ENCODE measurements at regions of chr1 and their contacts with region 1.

Region 1: GRCh38 chr1:221987860-221988520 is 246.1 kb upstream of the DUSP10 start:
- DNase-seq: peak; percentile 96
- ATAC-seq: peak; percentile 64
- H3K4me3 ChIP-seq: no peak overlapping the region
- H3K27ac ChIP-seq: peak overlapping the region; percentile 64
- H3K4me1 ChIP-seq: peaks cover 23% of the 10 kb centered on the region
- H3K27me3 ChIP-seq: no peaks in the 10 kb centered on the region
- CTCF ChIP-seq: no peak
- POLR2A ChIP-seq: no peak
- RAD21 ChIP-seq: no peak

Region 2: GRCh38 chr1:221699577-221699976 is 288.4 kb before region 1 on chr1:
- CTCF ChIA-PET with region 1: interaction called, 10 read pairs
- POLR2A ChIA-PET with region 1: no interaction called
- dilution Hi-C with region 1: no loop called
- in situ Hi-C with region 1: no loop called
- intact Hi-C with region 1: no loop called
- DNase-seq: peak; percentile 75
- ATAC-seq: peak; percentile 50
- H3K4me3 ChIP-seq: no peak overlapping the region
- H3K27ac ChIP-seq: peak overlapping the region; percentile 35; the same call in 1 of the 2 replicates
- H3K4me1 ChIP-seq: peaks cover 19% of the 10 kb centered on the region
- H3K27me3 ChIP-seq: no peaks in the 10 kb centered on the region
- CTCF ChIP-seq: no peak
- POLR2A ChIP-seq: no peak
- RAD21 ChIP-seq: no peak

Region 3: GRCh38 chr1:221858818-221859611 is 129.0 kb before region 1 on chr1:
- CTCF ChIA-PET with region 1: no interaction called
- POLR2A ChIA-PET with region 1: no interaction called
- dilution Hi-C with region 1: no loop called
- in situ Hi-C with region 1: no loop called
- intact Hi-C with region 1: no loop called
- DNase-seq: peak; percentile 93
- ATAC-seq: peak; percentile 89
- H3K4me3 ChIP-seq: no peak overlapping the region
- H3K27ac ChIP-seq: no peak overlapping the region
- H3K4me1 ChIP-seq: peaks cover 2% of the 10 kb centered on the region
- H3K27me3 ChIP-seq: no peaks in the 10 kb centered on the region
- CTCF ChIP-seq: no peak
- POLR2A ChIP-seq: no peak
- RAD21 ChIP-seq: peak; percentile 14; the same call in 1 of the 2 replicates

Region 4: DNA sequence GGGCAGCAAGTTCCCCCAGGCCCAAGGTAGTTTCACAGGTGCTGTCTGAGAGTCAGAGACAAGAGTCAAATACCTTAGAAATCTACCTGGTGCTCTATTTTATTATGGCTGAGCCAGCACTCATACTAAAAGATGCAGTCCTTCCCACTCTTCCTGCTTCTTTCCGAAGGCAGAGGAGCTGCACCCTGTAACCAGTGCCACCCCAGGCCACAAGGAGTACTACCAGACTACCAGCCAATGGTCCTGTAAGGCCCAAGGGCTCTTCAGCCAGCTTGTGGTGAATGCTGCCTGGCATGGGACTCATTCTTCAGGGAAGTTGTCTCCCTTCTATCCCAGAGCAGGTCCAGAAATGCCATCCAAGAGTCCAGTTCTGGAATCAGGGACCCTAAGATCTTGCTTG is 42.3 kb before region 1 on chr1:
- CTCF ChIA-PET with region 1: no interaction called
- POLR2A ChIA-PET with region 1: no interaction called
- dilution Hi-C with region 1: no loop called
- in situ Hi-C with region 1: no loop called
- intact Hi-C with region 1: loop called (anchors 2 kb)
- DNase-seq: no peak
- ATAC-seq: no peak
- H3K4me3 ChIP-seq: no peak overlapping the region
- H3K27ac ChIP-seq: no peak overlapping the region
- H3K4me1 ChIP-seq: no peaks in the 10 kb centered on the region
- H3K27me3 ChIP-seq: no peaks in the 10 kb centered on the region
- CTCF ChIP-seq: no peak
- POLR2A ChIP-seq: no peak
- RAD21 ChIP-seq: no peak

Measured in IMR-90 (cell line).